MCF 10A (cell line): ENCODE measurements at regions of chr15 and their contacts with region 1.

Region 1: GRCh38 chr15:48963524-48964113 is at the start of gene SHC4:
- DNase-seq: peak; percentile 81
- H3K4me3 Mint-ChIP-seq: peak within 1 kb of the TSS; percentile 76
- H3K27ac Mint-ChIP-seq: no peak within 1 kb of the TSS
- H3K4me1 Mint-ChIP-seq: peaks cover 5% of the 10 kb centered on the region
- H3K27me3 Mint-ChIP-seq: no peaks in the 10 kb centered on the region
- CTCF ChIP-seq: peak; percentile 31
- total RNA-seq, gene SHC4: 0.26 and 0.49 TPM in 2 replicates

Region 2: GRCh38 chr15:48352474-48353072 is 611.0 kb before region 1 on chr15:
- CTCF ChIA-PET with region 1: no interaction called
- POLR2A ChIA-PET with region 1: no interaction called
- intact Hi-C with region 1: loop called (anchors 10 kb)
- DNase-seq: peak; percentile 83
- H3K4me3 Mint-ChIP-seq: no peak overlapping the region
- H3K27ac Mint-ChIP-seq: no peak overlapping the region
- H3K4me1 Mint-ChIP-seq: peaks cover 11% of the 10 kb centered on the region
- H3K27me3 Mint-ChIP-seq: no peaks in the 10 kb centered on the region
- CTCF ChIP-seq: peak; percentile 73

Region 3: DNA sequence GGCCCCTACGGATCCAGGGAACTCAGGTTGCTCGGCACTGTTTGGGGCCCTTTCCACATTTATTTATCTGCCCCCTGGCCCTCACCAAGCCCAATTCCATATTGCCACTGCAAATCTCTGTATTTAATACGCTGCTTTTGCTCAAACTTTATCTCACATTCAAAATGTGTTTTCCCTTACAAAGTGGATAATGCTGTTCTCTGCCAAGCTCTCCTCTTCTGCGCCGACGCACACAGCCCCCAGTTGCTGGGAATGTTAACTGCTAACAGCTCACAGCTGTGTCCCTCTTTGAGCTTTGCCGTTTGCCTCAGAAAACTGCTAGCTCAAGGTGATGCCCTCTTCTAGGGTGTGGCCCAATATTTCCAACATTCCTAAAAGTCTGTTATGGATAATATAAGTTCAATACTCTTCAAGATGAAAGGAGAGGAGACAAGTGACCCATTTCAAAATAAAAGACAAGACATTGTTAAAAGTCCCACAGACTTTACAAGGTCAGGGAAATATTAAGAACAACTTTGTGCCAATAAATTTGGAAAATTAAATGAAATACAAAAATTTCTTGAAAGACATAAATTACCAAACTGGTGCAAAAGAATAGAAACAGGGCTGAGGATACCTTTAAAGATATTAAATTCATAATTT is 305.5 kb before region 1 on chr15:
- CTCF ChIA-PET with region 1: no interaction called
- POLR2A ChIA-PET with region 1: no interaction called
- intact Hi-C with region 1: no loop called
- DNase-seq: no peak
- H3K4me3 Mint-ChIP-seq: no peak overlapping the region
- H3K27ac Mint-ChIP-seq: no peak overlapping the region
- H3K4me1 Mint-ChIP-seq: no peaks in the 10 kb centered on the region
- H3K27me3 Mint-ChIP-seq: no peaks in the 10 kb centered on the region
- CTCF ChIP-seq: no peak

Region 4: GRCh38 chr15:48861813-48862431 is 101.7 kb before region 1 on chr15:
- CTCF ChIA-PET with region 1: interaction called, 127 read pairs
- POLR2A ChIA-PET with region 1: interaction called, 5 read pairs
- intact Hi-C with region 1: loop called (anchors 1 kb)
- DNase-seq: peak; percentile 72
- H3K4me3 Mint-ChIP-seq: no peak overlapping the region
- H3K27ac Mint-ChIP-seq: peak overlapping the region; percentile 61
- H3K4me1 Mint-ChIP-seq: peaks cover 29% of the 10 kb centered on the region
- H3K27me3 Mint-ChIP-seq: no peaks in the 10 kb centered on the region
- CTCF ChIP-seq: peak; percentile 73

Region 5: GRCh38 chr15:48975472-48976419 is 12.1 kb after region 1 on chr15:
- CTCF ChIA-PET with region 1: interaction called, 106 read pairs
- POLR2A ChIA-PET with region 1: interaction called, 12 read pairs
- intact Hi-C with region 1: no loop called
- DNase-seq: peak; percentile 74
- H3K4me3 Mint-ChIP-seq: peak overlapping the region; percentile 45
- H3K27ac Mint-ChIP-seq: no peak overlapping the region
- H3K4me1 Mint-ChIP-seq: peaks cover 10% of the 10 kb centered on the region
- H3K27me3 Mint-ChIP-seq: no peaks in the 10 kb centered on the region
- CTCF ChIP-seq: peak; percentile 91

Region 6: DNA sequence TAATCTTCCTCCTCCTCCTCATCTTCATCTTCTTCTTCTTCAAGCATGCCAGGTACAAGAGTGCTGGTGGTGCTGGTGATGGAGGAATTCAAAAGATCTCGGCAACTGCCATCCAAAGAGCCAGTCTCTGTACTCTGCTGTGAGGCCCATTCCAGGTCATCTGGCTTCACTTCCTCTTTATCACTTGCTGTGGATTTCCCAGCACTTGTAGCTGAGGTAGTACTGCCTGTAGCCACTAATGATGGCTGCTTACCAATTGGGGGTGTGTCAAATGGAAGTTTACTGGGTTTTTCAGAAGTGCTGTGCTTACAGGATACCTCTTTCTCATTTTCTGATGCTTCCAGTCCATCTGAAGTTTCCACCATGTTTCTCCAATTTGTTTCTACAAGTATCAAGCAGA is 28.9 kb after region 1 on chr15:
- CTCF ChIA-PET with region 1: no interaction called
- POLR2A ChIA-PET with region 1: no interaction called
- intact Hi-C with region 1: no loop called
- DNase-seq: no peak
- H3K4me3 Mint-ChIP-seq: no peak overlapping the region
- H3K27ac Mint-ChIP-seq: no peak overlapping the region
- H3K4me1 Mint-ChIP-seq: no peaks in the 10 kb centered on the region
- H3K27me3 Mint-ChIP-seq: no peaks in the 10 kb centered on the region
- CTCF ChIP-seq: no peak

Region 7: GRCh38 chr15:50051803-50052419 is 1088.3 kb after region 1 on chr15:
- CTCF ChIA-PET with region 1: interaction called, 3 read pairs
- POLR2A ChIA-PET with region 1: interaction called, 4 read pairs
- intact Hi-C with region 1: loop called (anchors 5 kb)
- DNase-seq: peak; percentile 79
- H3K4me3 Mint-ChIP-seq: no peak overlapping the region
- H3K27ac Mint-ChIP-seq: peak overlapping the region; percentile 51
- H3K4me1 Mint-ChIP-seq: peaks cover 11% of the 10 kb centered on the region
- H3K27me3 Mint-ChIP-seq: no peaks in the 10 kb centered on the region
- CTCF ChIP-seq: peak; percentile 79